ENCODE measurements at regions of chr6 and their contacts with region 1.

Region 1: DNA sequence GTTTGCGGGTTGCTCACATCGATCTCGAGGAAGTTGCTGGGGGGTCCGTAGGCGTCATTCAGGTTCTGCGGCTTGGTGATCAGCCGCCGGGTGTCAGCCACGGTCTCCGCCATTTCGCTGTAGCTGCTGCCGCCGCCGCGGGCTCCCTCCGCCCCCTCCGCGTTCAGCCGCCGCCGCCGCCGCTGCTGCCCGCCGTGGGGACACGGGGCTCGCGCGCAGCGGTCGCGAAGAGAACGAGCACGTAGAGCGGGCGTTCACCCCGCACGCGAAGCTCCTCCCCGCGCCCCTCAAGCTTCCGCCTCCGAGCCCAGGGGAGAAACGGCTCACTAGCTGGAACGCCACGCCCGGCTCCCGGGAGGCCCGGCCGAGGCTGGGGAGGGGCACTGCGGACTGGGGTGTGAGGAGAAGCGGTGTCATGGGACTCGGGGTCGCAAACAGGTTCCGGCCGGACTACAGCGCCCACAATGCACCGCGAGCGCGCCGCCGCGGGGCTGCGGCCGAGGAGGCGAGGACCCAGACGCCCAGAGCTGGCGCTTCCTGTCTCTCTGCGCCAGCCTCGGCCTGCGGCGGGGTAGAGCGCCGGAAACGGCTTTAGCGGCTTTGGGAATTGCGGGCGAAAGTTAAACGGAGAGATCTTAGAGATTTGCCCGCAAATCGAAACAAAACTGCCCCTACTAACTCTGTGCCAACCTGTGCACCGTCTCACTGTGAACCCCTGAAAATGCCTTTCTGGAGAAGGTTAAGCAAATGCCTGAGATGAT is at the start of gene SNX3:
- H3K4me3 Mint-ChIP-seq: peak within 1 kb of the TSS; percentile 90
- H3K27ac Mint-ChIP-seq: peak within 1 kb of the TSS; percentile 90
- H3K4me1 Mint-ChIP-seq: peaks cover 10% of the 10 kb centered on the region
- H3K27me3 Mint-ChIP-seq: no peaks in the 10 kb centered on the region

Region 2: DNA sequence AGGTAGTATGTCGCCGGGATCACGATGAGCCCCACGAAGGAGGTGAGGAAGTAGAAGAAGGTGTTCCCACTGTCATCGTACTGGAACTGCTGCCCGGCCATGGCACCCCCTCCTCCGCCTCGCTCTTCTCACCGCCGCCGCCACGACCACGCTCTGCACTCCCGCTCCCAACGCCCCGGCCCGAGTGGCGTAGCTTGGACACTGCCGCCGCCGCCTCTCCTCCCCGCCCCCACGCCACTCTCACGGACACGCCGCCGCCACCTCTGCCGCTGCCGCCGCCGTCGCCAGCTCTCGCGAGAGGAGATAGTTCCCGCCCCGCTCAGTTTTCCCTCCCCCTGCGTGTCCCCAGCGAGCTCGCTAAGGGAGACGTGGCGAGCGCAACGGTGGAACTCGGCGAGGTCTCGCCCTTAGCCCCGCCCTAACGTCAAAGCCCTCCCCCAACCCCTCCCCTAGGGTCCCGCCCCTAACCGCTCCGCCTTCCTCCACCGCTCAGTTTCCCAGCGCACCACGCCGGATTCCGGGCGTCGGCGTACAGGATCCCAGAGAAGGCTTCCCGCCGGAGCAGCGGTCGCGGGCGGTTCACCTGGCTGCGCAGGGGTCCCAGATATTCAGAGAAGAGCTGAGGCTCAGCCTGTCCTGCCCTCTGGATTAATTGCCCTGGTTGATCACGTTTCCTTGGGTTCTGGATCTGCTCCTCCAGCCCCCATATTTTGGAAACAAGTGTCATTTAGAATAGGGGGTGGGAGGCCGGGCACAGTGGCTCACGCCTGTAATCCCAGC is 302.9 kb before region 1 on chr6 and contains the start of gene SEC63:
- intact Hi-C with region 1: loop called (anchors 5 kb)
- H3K4me3 Mint-ChIP-seq: peak within 1 kb of the TSS; percentile 93
- H3K27ac Mint-ChIP-seq: peak within 1 kb of the TSS; percentile 95
- H3K4me1 Mint-ChIP-seq: peaks cover 30% of the 10 kb centered on the region
- H3K27me3 Mint-ChIP-seq: peaks cover 10% of the 10 kb centered on the region

Region 3: GRCh38 chr6:108294727-108295625 is 34.0 kb after region 1 on chr6 and contains the start of gene AFG1L:
- intact Hi-C with region 1: loop called (anchors 1 kb)
- H3K4me3 Mint-ChIP-seq: peak within 1 kb of the TSS; percentile 95
- H3K27ac Mint-ChIP-seq: peak within 1 kb of the TSS; percentile 100
- H3K4me1 Mint-ChIP-seq: peaks cover 32% of the 10 kb centered on the region
- H3K27me3 Mint-ChIP-seq: no peaks in the 10 kb centered on the region